OCI-LY7 (cell line): ENCODE measurements at regions of chr10 and their contacts with region 1.

Region 1: GRCh38 chr10:118568327-118568848 is 27.1 kb downstream of the PRLHR start:
- DNase-seq: peak; percentile 70
- H3K4me3 ChIP-seq: no peak overlapping the region
- H3K27ac ChIP-seq: no peak overlapping the region
- H3K4me1 ChIP-seq: no peaks in the 10 kb centered on the region
- CTCF ChIP-seq: peak; percentile 75

Region 2: GRCh38 chr10:118621304-118621948 is 53.0 kb after region 1 on chr10:
- CTCF ChIA-PET with region 1: no interaction called
- POLR2A ChIA-PET with region 1: no interaction called
- intact Hi-C with region 1: loop called (anchors 5 kb)
- DNase-seq: no peak
- H3K4me3 ChIP-seq: no peak overlapping the region
- H3K27ac ChIP-seq: no peak overlapping the region
- H3K4me1 ChIP-seq: no peaks in the 10 kb centered on the region
- CTCF ChIP-seq: no peak

Region 3: GRCh38 chr10:118698421-118698820 is 130.0 kb after region 1 on chr10:
- CTCF ChIA-PET with region 1: no interaction called
- POLR2A ChIA-PET with region 1: no interaction called
- intact Hi-C with region 1: no loop called
- DNase-seq: no peak
- H3K4me3 ChIP-seq: no peak overlapping the region
- H3K27ac ChIP-seq: no peak overlapping the region
- H3K4me1 ChIP-seq: no peaks in the 10 kb centered on the region
- CTCF ChIP-seq: no peak

Region 4: DNA sequence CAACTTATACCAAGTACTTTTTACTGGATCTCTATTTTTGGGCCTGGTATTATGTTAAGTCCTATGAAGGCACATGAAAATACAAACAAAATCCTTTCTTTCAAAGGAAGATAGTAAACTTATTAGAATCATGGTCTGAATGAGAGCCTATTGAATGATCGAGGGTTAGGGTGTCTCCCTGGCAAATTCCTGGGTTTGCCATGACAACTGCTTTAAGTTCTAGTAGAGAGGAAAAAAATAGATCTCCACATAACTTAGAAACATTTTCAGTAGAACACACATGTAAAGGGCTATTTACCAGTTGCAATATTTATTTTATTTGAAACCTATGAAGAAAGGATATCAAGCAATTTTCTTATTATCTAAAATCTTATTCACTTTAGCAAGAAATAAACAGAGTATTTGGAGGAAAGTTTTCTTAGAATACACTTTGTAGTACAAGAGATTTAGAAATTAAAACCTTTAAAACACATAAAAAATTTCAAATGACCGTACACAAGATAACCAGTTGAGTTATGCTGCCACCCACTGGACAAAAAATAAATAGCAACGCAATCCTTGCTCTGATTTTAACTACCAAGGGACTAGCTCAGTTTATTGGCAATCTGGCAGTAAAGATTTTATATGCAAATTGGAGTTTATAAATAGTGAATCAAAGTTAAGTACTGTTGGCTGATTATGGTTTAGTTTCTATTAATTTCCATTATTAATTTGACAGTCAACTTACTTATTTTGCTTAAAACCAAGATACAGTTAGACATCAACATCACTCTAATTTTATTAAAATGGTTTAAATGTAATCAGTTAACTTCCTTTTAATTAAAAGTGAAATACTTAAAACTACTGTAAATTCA is 152.5 kb after region 1 on chr10:
- CTCF ChIA-PET with region 1: no interaction called
- POLR2A ChIA-PET with region 1: interaction called, 8 read pairs
- intact Hi-C with region 1: loop called (anchors 2 kb)
- DNase-seq: peak; percentile 56
- H3K4me3 ChIP-seq: no peak overlapping the region
- H3K27ac ChIP-seq: no peak overlapping the region
- H3K4me1 ChIP-seq: no peaks in the 10 kb centered on the region
- CTCF ChIP-seq: peak; percentile 99

Region 5: DNA sequence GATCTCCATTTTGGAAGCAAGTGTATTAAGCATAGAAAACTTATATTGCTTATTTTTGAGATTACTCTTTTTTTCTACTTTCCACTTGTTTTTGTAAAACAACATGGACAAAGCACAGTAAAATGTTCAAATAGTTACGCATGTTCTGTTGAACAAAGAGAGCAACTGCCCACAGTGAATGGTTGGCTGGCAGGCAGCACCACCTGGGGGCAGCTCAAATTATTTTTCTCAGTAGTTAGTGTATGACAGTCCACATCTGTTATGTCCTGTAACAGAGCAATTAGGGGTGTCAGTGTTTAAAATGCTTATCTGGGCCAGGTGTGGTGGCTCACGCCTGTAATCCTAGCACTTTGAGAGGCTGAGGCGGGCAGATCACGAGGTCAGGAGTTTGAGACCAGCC is 232.5 kb after region 1 on chr10:
- CTCF ChIA-PET with region 1: no interaction called
- POLR2A ChIA-PET with region 1: no interaction called
- intact Hi-C with region 1: loop called (anchors 10 kb)
- DNase-seq: peak; percentile 25
- H3K4me3 ChIP-seq: no peak overlapping the region
- H3K27ac ChIP-seq: no peak overlapping the region
- H3K4me1 ChIP-seq: no peaks in the 10 kb centered on the region
- CTCF ChIP-seq: peak; percentile 61

Region 6: DNA sequence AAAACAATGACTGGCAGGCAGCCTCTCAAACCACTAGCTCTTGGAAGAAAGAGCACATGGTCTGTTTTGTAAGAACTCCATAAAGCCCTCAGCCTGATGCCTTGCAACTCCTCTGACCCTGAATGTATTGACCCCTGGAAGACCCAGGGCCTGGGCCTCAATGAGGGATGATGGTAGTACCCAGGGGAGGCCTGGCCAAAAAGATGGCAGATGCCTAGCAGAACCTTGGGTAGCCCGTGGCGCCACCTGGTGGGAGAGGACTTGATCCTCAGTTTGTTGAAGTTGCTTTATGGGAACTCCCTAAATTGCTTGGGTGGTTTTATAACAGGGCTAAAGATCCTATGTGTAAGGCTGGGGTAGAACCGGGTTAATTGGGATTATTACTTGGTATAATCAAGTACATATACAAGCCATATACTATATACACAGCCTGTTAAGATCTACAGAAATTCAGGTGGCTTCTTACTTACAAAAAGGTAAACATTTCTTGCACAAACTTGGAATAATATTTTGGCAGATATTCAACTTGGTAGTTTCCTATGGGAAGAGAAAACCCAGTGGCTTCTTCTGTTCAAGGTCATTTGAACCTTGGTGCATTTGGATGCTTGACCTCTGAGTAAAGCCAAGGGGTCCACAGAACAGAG is 282.2 kb after region 1 on chr10:
- CTCF ChIA-PET with region 1: no interaction called
- POLR2A ChIA-PET with region 1: no interaction called
- intact Hi-C with region 1: loop called (anchors 1 kb)
- DNase-seq: peak; percentile 66
- H3K4me3 ChIP-seq: no peak overlapping the region
- H3K27ac ChIP-seq: no peak overlapping the region
- H3K4me1 ChIP-seq: no peaks in the 10 kb centered on the region
- CTCF ChIP-seq: peak; percentile 87